GM13976 (cell line): ENCODE measurements at regions of chr7 and their contacts with region 1.

Region 1: DNA sequence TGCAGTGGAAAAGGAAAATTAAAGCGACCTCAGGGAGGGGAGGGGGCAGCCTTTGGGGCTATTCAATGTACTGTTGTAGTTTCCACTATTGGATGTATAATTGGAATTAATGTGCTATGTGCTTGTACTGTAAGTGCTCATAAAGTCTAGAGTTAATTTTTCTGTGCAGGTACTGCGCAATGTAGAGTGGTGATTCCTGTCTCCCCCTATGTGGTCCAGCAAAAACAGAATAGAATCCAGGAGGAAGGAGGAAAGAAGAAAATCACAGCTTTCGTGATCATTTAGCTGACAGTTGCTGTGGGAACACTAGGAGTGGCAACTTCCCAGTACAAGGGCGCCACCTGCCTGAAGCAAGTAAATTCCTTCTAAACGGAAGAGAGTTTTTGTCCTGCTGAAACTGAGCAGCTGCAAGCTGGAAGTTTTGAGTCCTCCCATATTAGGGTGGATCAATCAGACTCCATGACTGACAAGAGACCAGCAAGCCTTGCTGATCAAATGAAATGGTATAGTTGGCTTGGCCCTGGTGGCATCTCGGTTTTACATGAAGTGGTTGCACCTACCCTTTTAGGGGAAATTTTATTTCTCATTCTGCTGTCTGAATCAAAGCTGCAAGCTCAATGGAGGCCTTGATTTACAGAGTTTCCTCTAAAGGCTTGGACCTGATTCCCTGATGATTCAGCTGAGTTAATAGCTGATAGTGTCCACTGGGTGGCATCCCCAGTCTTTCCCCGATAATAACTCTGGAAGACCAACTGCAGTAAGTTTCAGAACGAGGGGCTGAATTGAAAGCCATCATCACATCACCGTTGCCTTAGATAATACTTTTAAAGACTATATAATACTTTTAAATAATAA is 299.8 kb downstream of the HGF start:
- DNase-seq: peak; percentile 11
- CTCF ChIP-seq: peak; percentile 57

Region 2: GRCh38 chr7:80699045-80699638 is 771.0 kb before region 1 on chr7:
- in situ Hi-C with region 1: loop called (anchors 25 kb)
- DNase-seq: peak; percentile 13
- CTCF ChIP-seq: peak; percentile 13

Region 3: GRCh38 chr7:80732630-80733029 is 737.5 kb before region 1 on chr7:
- in situ Hi-C with region 1: no loop called
- DNase-seq: no peak
- CTCF ChIP-seq: no peak

Region 4: DNA sequence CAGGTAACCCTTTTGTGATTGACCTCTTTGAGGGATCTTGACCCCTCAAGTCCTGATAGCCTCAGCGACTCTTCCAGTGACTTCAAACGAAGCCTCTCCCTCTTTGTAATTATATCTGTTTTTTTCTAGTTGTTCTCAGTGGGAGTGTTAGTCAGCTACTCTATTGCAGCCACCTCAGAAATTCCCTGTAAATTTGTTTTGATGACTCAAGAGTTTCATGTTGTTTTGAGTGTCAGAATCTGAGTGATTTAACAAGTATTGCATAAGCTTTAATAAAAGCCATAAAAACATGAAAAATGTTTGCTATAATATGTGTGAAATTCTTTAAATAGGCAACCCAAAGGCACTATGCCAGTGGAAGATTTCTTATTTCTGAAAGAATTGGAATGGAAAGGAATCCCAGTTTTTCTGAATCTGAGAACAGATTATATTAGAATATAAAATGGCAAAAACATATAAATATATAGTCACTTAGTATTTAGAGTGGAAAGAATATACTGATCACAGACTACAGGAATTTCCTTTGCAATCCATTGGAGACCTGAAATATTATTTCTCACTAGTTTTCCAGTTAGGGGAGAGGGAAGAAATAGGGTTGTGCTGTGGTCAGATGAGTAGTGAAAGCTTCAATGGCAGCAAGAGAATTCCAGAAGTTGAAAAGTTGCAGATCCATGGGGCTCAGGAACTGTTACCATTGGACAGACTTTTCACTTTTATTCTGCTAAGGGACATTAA is 456.8 kb before region 1 on chr7:
- in situ Hi-C with region 1: no loop called
- DNase-seq: no peak
- CTCF ChIP-seq: no peak

Region 5: GRCh38 chr7:81669476-81670105 is 199.5 kb after region 1 on chr7:
- in situ Hi-C with region 1: no loop called
- DNase-seq: no peak
- CTCF ChIP-seq: no peak

Region 6: DNA sequence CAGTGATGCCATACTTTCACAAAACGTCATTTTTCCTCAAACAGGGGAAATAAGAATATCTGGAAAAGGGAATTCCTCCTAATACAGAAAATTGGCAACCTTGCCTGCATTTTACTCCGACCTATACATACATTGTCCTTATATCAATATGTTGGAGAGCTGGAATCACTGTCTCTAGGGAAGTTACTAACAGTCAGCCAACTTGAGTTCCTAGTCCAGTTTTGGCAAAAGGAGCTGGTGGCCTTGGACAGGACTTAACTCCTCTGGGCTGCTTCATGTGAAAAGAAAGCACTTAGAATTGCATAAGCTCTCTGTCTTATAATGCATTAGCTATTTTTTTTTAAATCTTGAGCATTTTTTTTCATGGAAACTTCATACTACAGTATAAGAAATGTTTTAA is 474.0 kb after region 1 on chr7:
- in situ Hi-C with region 1: no loop called
- DNase-seq: no peak
- CTCF ChIP-seq: no peak